GM12878 (cell line): ENCODE measurements at regions of chr7 and their contacts with region 1.

Region 1: DNA sequence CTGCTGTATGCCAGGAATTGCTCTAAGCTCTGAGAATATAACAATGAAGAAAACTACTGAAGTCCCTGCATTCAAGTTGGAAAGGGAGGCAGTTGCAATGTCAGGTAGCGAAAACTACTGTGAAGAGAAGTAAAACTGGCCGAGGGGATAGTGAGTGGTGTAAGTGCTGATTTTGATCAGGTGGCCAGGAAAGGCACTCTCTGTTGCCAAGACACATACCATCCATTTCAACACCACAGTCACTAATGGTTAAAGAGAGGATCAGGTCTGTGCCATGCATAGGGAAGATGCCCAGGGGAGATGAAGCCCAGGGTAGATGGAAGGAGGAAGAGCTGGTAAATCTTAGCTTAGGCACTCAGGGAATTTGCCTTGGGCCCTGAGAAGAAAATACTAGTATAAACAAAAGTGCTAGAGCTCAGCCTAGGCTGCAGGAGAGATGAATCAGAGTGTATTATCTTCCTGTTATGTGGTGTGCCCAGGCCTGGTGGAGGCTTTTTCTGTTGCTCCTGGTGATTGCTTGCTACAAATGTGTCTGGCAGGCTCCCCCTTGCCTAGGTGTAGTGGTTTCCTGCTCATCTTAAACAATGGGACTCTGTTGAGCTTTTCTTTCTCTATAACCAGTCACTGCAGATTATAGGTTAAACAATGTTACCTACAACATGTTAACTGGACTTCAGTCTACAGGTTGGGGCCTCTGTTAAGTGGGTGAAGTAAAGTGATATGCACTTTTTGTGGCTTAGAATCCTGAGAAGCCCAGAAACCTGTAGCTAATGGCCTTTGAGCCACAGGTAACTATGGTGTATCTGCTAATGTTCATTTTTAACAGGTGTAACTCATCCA is 125.5 kb downstream of the LRRC4 start:
- DNase-seq: no peak
- ATAC-seq: peak; percentile 11; the same call in 1 of the 3 replicates
- H3K4me3 ChIP-seq: no peak overlapping the region
- H3K27ac ChIP-seq: no peak overlapping the region
- H3K4me1 ChIP-seq: peaks cover 53% of the 10 kb centered on the region
- H3K27me3 ChIP-seq: no peaks in the 10 kb centered on the region
- CTCF ChIP-seq: no peak
- EP300 ChIP-seq: no peak
- POLR2A ChIP-seq: no peak
- RAD21 ChIP-seq: no peak

Region 2: DNA sequence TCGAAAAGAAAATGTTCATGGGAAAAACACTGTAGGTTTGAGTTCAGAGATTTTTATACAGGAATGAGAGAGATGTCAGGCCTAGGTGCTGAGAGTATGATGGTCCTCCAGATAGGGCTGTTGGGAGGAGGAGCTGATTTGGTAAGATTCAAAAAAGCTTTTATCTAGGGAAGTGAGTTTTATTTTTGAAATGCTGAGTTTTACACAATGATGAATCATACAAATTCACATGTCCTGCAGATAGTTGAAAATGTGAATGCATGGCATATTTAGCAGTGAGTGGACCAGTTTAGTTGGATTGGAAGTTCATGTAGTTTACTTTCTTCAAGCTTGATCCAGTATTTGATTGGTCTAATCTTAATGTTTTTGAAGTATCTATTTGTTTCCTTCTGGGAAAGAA is 29.3 kb before region 1 on chr7:
- CTCF ChIA-PET with region 1: interaction called, 3 read pairs
- POLR2A ChIA-PET with region 1: no interaction called
- RAD21 ChIA-PET with region 1: interaction called, 3 read pairs
- SMC1A ChIA-PET with region 1: interaction called, 12 read pairs
- in situ Hi-C with region 1: no loop called
- intact Hi-C with region 1: no loop called
- DNase-seq: no peak
- ATAC-seq: no peak
- H3K4me3 ChIP-seq: no peak overlapping the region
- H3K27ac ChIP-seq: no peak overlapping the region
- H3K4me1 ChIP-seq: peaks cover 7% of the 10 kb centered on the region; the same call in 1 of the 2 replicates
- H3K27me3 ChIP-seq: no peaks in the 10 kb centered on the region
- CTCF ChIP-seq: no peak
- EP300 ChIP-seq: no peak
- POLR2A ChIP-seq: no peak
- RAD21 ChIP-seq: no peak

Region 3: GRCh38 chr7:127920787-127921438 is 15.2 kb after region 1 on chr7:
- CTCF ChIA-PET with region 1: interaction called, 4 read pairs
- POLR2A ChIA-PET with region 1: interaction called, 4 read pairs
- RAD21 ChIA-PET with region 1: interaction called, 3 read pairs
- SMC1A ChIA-PET with region 1: interaction called, 10 read pairs
- in situ Hi-C with region 1: no loop called
- intact Hi-C with region 1: no loop called
- DNase-seq: no peak
- ATAC-seq: peak; percentile 48
- H3K4me3 ChIP-seq: no peak overlapping the region
- H3K27ac ChIP-seq: peak overlapping the region; percentile 20; the same call in 1 of the 2 replicates
- H3K4me1 ChIP-seq: peaks cover 8% of the 10 kb centered on the region; the same call in 1 of the 2 replicates
- H3K27me3 ChIP-seq: no peaks in the 10 kb centered on the region
- CTCF ChIP-seq: no peak
- EP300 ChIP-seq: no peak
- POLR2A ChIP-seq: no peak
- RAD21 ChIP-seq: no peak

Region 4: DNA sequence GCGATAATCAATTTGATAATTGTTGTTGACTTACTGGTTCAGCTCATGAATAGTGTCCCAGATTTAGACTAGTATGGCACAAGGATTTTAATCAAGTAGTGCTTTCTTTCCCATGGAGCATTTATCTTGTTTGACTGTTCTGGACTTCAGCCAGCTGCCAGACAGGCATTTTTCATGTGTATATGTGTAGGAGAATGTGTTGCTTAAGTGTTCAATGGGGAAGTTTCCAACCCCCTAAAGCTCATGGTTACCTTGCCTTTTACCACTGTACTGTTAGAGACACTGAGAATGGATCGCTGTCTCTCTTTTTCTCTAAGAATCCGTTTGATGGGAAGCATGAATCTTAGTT is 21.6 kb after region 1 on chr7:
- CTCF ChIA-PET with region 1: interaction called, 4 read pairs
- POLR2A ChIA-PET with region 1: interaction called, 4 read pairs
- RAD21 ChIA-PET with region 1: interaction called, 4 read pairs
- SMC1A ChIA-PET with region 1: interaction called, 10 read pairs
- in situ Hi-C with region 1: no loop called
- intact Hi-C with region 1: no loop called
- DNase-seq: no peak
- ATAC-seq: peak; percentile 35; the same call in 2 of the 3 replicates
- H3K4me3 ChIP-seq: peak overlapping the region; percentile 30; the same call in 1 of the 2 replicates
- H3K27ac ChIP-seq: peak overlapping the region; percentile 36
- H3K4me1 ChIP-seq: peaks cover 41% of the 10 kb centered on the region
- H3K27me3 ChIP-seq: no peaks in the 10 kb centered on the region
- CTCF ChIP-seq: no peak
- EP300 ChIP-seq: no peak
- POLR2A ChIP-seq: no peak
- RAD21 ChIP-seq: no peak

Region 5: DNA sequence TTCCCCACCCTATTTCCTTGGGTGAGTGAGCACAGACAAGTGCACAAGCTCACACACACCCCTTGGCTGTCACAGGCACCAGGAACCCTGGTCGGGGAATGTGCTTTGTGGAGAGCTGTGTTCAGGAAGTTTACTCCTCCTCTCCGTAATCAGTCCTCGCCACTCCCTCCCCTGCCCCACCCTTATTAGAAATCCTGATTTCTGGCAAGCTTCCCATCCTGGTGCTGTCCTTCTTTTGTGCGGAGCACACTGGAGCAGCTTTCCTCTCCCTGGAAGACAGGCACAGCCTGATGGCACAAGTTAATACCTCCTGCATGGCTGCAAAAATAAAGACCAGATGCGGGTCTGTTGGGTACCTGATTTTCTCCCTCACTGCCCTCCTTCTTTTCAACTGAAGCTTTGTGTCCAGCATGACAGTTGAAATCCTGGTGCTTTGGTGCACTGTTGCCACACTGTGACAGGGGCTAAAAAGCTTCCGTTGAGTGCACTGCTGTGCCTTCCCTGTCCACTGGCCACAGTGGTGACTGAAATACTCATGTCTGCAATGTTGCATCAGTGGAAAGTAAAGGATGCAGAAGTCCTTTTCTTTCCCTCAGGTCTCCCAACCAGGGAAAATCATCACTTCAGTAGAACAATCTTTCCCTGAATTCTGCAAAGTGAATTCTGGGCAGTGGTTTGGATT is 70.5 kb after region 1 on chr7:
- CTCF ChIA-PET with region 1: no interaction called
- POLR2A ChIA-PET with region 1: no interaction called
- RAD21 ChIA-PET with region 1: no interaction called
- SMC1A ChIA-PET with region 1: no interaction called
- in situ Hi-C with region 1: no loop called
- intact Hi-C with region 1: no loop called
- DNase-seq: no peak
- ATAC-seq: no peak
- H3K4me3 ChIP-seq: no peak overlapping the region
- H3K27ac ChIP-seq: no peak overlapping the region
- H3K4me1 ChIP-seq: no peaks in the 10 kb centered on the region
- H3K27me3 ChIP-seq: no peaks in the 10 kb centered on the region
- CTCF ChIP-seq: no peak
- EP300 ChIP-seq: no peak
- POLR2A ChIP-seq: no peak
- RAD21 ChIP-seq: no peak